Vagina (tissue), 2 donors: ENCODE measurements at regions of chr15 and their contacts with region 1.

Region 1: GRCh38 chr15:63600616-63601025 is 3.4 kb downstream of the FBXL22 start:
- DNase-seq: no peak
- H3K4me3 ChIP-seq: peak overlapping the region; percentile 80 to 89
- H3K27ac ChIP-seq: peak overlapping the region; percentile 81
- H3K4me1 ChIP-seq: peaks cover 64% of the 10 kb centered on the region
- H3K27me3 ChIP-seq: no peaks in the 10 kb centered on the region
- CTCF ChIP-seq: peak in 1 of 3 experiments; percentile 27
- POLR2A ChIP-seq: peak in 1 of 2 donors; percentile 39

Region 2: GRCh38 chr15:63487076-63487757 is 113.4 kb before region 1 on chr15:
- intact Hi-C with region 1: loop called (anchors 10 kb)
- DNase-seq: peak in 1 of 2 donors; percentile 86
- H3K4me3 ChIP-seq: no peak overlapping the region
- H3K27ac ChIP-seq: no peak overlapping the region
- H3K4me1 ChIP-seq: peaks cover 10% of the 10 kb centered on the region
- H3K27me3 ChIP-seq: no peaks in the 10 kb centered on the region
- CTCF ChIP-seq: peak; percentile 71 to 82 (median 81)
- POLR2A ChIP-seq: no peak

Region 3: DNA sequence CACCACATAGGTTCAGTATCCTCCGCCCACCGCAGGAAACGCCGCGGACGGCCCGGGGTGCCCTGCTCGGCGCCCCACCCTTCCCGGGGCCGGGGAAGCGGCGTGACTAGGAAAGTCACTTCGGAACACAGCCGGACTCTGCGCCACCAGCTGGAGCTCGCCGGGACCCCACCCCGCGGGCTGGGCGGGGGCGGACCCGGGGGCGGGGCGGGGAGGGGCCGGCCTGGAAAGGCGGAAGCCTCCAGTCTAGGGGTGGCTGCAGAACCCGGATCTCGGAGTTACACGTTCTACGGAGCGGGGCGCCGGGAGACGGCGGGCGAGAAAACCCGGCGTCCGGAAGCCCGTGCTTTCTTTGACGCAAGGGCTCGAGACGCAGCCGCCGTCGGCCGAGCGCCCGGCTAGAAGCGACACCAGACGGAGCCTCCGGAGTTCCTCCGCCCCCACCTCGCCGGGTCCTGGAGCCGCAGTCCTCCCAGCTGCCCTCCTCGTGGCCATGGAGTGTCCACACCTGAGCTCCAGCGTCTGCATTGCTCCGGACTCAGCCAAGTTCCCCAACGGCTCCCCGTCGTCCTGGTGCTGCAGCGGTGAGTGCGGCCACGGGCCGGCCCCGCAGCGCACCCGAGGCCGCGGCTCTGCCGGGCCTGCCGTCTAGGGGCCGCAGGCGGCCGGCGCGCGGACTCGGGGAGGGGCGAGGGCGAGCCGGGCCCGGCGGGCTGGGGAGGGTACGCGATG is 96.2 kb before region 1 on chr15 and contains the start of gene USP3:
- intact Hi-C with region 1: loop called (anchors 10 kb)
- DNase-seq: no peak
- H3K4me3 ChIP-seq: peak within 1 kb of the TSS; percentile 82 to 92
- H3K27ac ChIP-seq: peak within 1 kb of the TSS; percentile 97
- H3K4me1 ChIP-seq: peaks cover 74% of the 10 kb centered on the region
- H3K27me3 ChIP-seq: no peaks in the 10 kb centered on the region
- CTCF ChIP-seq: no peak
- POLR2A ChIP-seq: peak in 1 of 2 donors; percentile 74
- total RNA-seq, gene USP3: 39.5 TPM